PC-9 (cell line): ENCODE measurements at regions of chr12 and their contacts with region 1.

Region 1: GRCh38 chr12:50986966-50987737 is 34.8 kb downstream of the HIGD1C start:
- DNase-seq: peak in 1 of 2 experiments; percentile 18
- H3K4me3 ChIP-seq: no peak overlapping the region
- H3K27ac ChIP-seq: no peak overlapping the region
- H3K4me1 ChIP-seq: no peaks in the 10 kb centered on the region
- H3K27me3 ChIP-seq: no peaks in the 10 kb centered on the region
- CTCF ChIP-seq: peak; percentile 62; the same call in 1 of the 2 replicates

Region 2: GRCh38 chr12:51083126-51083833 is 96.1 kb after region 1 on chr12 and contains the start of gene CSRNP2:
- CTCF ChIA-PET with region 1: interaction called, 7 read pairs
- POLR2A ChIA-PET with region 1: interaction called, 10 read pairs
- intact Hi-C with region 1: no loop called
- DNase-seq: peak; percentile 89 to 96
- H3K4me3 ChIP-seq: peak within 1 kb of the TSS; percentile 84
- H3K27ac ChIP-seq: peak within 1 kb of the TSS; percentile 30
- H3K4me1 ChIP-seq: peaks cover 8% of the 10 kb centered on the region
- H3K27me3 ChIP-seq: no peaks in the 10 kb centered on the region
- CTCF ChIP-seq: no peak
- total RNA-seq, gene CSRNP2: 19.3 and 23.1 TPM in 2 replicates